ENCODE measurements at regions of chr2 and their contacts with region 1.

Region 1: GRCh38 chr2:181499231-181499630 is 42.0 kb downstream of the ITGA4 start:
- DNase-seq: no peak
- ATAC-seq: no peak
- H3K4me3 ChIP-seq: no peak overlapping the region
- H3K4me3 Mint-ChIP-seq: no peak overlapping the region
- H3K27ac ChIP-seq: no peak overlapping the region
- H3K27ac Mint-ChIP-seq: no peak overlapping the region
- H3K4me1 ChIP-seq: no peaks in the 10 kb centered on the region
- H3K4me1 Mint-ChIP-seq: no peaks in the 10 kb centered on the region
- H3K27me3 ChIP-seq: no peaks in the 10 kb centered on the region
- H3K27me3 Mint-ChIP-seq: no peaks in the 10 kb centered on the region
- CTCF ChIP-seq: no peak

Region 2: DNA sequence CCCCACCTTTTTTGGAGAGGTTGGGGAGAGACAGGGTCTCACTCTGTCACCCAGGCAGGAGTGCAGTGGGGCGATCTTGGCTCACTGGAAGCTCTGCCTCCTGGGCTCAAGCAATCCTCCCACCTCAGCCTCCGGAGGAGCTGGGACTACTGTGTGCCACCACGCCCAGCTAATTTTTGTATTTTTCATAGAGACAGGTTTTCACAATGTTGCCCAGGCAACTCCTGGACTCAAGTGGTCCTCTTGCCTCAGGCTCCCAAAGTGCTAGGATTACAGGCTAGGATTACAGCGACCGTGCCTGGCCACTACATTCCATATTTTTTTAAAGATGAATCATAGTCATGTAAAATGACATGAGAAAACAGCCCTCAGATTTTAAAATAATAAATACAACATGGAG is 1524.5 kb before region 1 on chr2:
- CTCF ChIA-PET with region 1: no interaction called
- POLR2A ChIA-PET with region 1: no interaction called
- intact Hi-C with region 1: loop called (anchors 10 kb)
- DNase-seq: no peak
- ATAC-seq: no peak
- H3K4me3 ChIP-seq: no peak overlapping the region
- H3K4me3 Mint-ChIP-seq: no peak overlapping the region
- H3K27ac ChIP-seq: no peak overlapping the region
- H3K27ac Mint-ChIP-seq: no peak overlapping the region
- H3K4me1 ChIP-seq: no peaks in the 10 kb centered on the region
- H3K4me1 Mint-ChIP-seq: no peaks in the 10 kb centered on the region
- H3K27me3 ChIP-seq: no peaks in the 10 kb centered on the region
- H3K27me3 Mint-ChIP-seq: no peaks in the 10 kb centered on the region
- CTCF ChIP-seq: no peak

Region 3: DNA sequence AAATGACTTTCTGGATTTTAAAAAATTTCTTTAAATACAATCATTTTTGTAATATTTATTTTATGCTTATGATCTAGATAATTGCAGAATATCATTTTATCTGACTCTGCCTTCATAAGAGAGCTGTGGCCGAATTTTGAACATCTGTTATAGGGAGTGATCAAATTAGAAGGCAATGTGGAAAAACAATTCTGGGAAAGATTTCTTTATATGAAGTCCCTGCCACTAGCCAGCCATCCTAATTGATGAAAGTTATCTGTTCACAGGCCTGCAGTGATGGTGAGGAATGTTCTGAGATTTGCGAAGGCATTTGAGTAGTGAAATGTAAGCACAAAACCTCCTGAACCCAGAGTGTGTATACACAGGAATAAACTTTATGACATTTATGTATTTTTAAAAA is 37.5 kb after region 1 on chr2:
- CTCF ChIA-PET with region 1: no interaction called
- POLR2A ChIA-PET with region 1: no interaction called
- intact Hi-C with region 1: loop called (anchors 5 kb)
- DNase-seq: no peak
- ATAC-seq: no peak
- H3K4me3 ChIP-seq: no peak overlapping the region
- H3K4me3 Mint-ChIP-seq: no peak overlapping the region
- H3K27ac ChIP-seq: no peak overlapping the region
- H3K27ac Mint-ChIP-seq: no peak overlapping the region
- H3K4me1 ChIP-seq: no peaks in the 10 kb centered on the region
- H3K4me1 Mint-ChIP-seq: peaks cover 2% of the 10 kb centered on the region
- H3K27me3 ChIP-seq: no peaks in the 10 kb centered on the region
- H3K27me3 Mint-ChIP-seq: no peaks in the 10 kb centered on the region
- CTCF ChIP-seq: no peak

Measured in B cell (primary cell).